ENCODE measurements at regions of chr17 and their contacts with region 1.

Region 1: GRCh38 chr17:27733773-27734172 is 66.6 kb downstream of the NOS2 start:
- DNase-seq: no peak
- CTCF ChIP-seq: no peak

Region 2: GRCh38 chr17:27506348-27507231 is 227.2 kb before region 1 on chr17:
- in situ Hi-C with region 1: no loop called
- DNase-seq: peak; percentile 78
- CTCF ChIP-seq: no peak

Region 3: DNA sequence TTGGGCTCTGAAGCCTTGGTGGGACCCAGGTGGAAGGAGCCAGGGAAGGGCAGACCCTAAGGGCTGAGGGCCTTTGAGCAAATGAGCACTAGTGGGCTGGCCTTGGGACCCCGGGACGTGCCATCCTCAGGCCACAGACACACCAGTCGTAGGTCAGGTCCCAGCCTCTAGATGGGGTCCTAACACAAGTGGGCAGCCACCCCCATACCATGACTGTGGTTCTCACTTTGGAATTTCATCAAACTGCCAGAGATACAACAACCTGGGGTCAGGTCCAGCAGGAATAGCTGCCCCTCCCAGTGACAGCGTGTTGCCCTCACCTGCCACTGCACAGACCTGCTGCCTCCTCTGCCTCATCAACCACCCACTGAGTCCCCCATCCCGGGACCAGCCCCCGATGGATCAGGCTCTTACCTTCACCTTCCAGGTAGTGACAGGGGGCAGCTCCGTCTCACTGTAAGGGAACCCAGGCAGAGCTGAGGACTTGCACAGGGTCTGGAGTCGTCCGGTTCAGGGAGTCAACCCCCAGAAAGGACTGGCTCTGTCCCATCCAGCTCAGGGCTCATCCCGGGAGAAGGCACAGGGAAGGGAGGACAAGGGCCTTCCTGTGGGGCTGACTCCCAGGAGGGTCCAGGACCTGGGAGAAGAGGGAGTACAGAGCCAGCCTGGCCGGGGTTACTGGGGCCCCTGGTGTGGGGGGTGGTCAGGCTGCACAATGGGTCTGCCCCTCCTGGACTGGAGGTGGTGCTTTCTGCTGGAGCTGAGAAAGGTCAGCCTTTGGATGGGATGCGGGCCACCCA is 62.8 kb before region 1 on chr17:
- in situ Hi-C with region 1: loop called (anchors 10 kb)
- DNase-seq: peak; percentile 17
- CTCF ChIP-seq: no peak

Region 4: DNA sequence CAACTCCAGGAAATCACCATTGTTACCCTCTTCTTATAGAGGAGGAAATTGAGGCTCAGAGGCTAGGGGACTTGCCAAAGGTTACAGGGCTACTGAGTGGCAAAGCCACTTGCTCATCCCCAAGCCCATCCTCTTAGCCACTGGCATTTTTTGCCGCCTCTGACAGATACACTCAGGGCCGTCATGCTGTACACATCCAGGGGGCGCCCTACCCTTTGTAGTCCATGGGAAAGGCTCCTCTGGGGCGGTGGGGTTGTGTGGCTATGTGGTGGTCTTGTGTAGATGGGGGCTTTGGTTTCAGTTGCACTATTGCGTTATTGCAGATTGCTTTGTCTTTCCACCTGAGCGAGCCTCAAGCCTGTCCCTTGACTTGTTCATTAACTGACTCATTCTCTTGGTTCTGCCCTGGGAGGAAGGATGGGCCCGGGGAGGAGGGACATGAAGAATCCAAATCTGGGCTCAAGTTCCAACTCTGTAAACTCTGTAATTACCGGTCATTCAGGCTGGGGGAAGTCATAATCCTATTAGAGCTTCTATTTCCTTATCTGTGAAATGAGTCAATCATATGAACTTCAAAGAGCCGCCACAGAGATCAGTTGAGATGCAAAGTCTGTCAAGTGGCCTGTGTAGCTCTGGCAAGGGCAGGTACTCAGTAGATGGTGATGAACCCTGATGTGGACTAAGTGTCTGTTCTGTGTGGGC is 63.8 kb after region 1 on chr17:
- in situ Hi-C with region 1: no loop called
- DNase-seq: no peak
- CTCF ChIP-seq: no peak

Measured in GM13976 (cell line).